ENCODE measurements at regions of chr15 and their contacts with region 1.

Region 1: GRCh38 chr15:45198337-45199135 is 10.8 kb upstream of the SHF start:
- DNase-seq: peak in 1 of 2 experiments; percentile 96
- H3K4me3 ChIP-seq: peak overlapping the region; percentile 66 to 100 (median 96)
- H3K27ac ChIP-seq: peak overlapping the region; percentile 50; the same call in 1 of the 2 replicates
- H3K4me1 ChIP-seq: no peaks in the 10 kb centered on the region
- H3K27me3 ChIP-seq: no peaks in the 10 kb centered on the region; a peak in 1 of 7 replicates
- CTCF ChIP-seq: peak; percentile 61 to 84 (median 80)
- EP300 ChIP-seq: no peak
- POLR2A ChIP-seq: peak in 1 of 2 experiments; percentile 41; a peak in 1 of 3 replicates
- RAD21 ChIP-seq: peak; percentile 18 to 32; a peak in 3 of 4 replicates

Region 2: DNA sequence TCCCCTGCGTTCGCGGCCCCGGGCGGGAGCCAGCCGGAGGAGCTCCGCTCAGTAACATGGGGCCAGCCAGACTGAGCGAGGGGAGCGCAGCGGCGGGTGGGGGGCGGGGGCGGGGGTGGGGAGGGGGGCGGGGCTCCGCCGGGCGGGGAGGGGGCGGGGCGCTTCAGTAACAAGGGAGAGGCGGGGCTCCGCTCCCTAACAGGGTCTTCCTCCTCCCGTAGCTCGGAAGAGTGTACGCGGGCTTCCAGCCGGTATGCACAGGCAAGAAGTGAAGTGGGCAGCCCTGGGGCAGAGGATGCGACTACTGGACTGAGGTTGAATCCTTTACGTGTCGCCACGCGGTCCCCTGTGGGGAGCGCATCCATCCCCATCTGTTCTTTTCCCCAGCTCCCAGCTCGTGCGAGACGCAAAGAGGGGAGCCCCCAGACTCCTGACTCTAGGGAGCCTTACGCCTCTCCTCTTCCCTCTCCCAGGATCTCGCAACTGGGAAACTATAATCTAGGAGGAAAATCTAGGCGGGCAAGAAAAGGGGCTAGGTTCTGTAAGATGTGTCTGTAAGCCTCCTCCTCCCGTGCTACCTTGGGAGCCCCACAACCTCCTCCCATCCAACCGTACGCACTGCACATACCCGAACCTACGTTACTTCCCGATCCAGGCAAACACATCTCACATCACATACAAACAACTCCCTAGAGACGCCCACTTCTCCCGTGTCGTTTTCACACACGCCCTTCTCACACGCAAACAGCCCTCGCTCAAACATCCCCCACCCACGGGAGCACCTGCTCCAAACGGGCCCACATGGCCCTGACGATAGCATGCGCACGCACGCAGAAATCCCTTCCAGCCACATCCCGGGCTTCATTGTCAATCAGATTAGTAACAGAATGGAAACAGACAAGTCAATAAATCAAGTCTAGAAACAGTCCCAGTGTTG is 10.4 kb before region 1 on chr15 and contains the start of gene SHF:
- CTCF ChIA-PET with region 1: interaction called, 1,117 read pairs
- POLR2A ChIA-PET with region 1: interaction called, 55 read pairs
- DNase-seq: peak in 1 of 2 experiments; percentile 77
- H3K4me3 ChIP-seq: peak within 1 kb of the TSS; percentile 61 to 93 (median 82)
- H3K27ac ChIP-seq: no peak within 1 kb of the TSS
- H3K4me1 ChIP-seq: peaks cover 5 to 22% (median 13%) of the 10 kb centered on the region in 4 experiments
- H3K27me3 ChIP-seq: peaks cover 0 to 19% (median 13%) of the 10 kb centered on the region in 4 experiments; a peak in 6 of 7 replicates
- CTCF ChIP-seq: no peak
- EP300 ChIP-seq: no peak
- POLR2A ChIP-seq: peak in 1 of 2 experiments; percentile 49; a peak in 1 of 3 replicates
- RAD21 ChIP-seq: no peak
- total RNA-seq, gene SHF: 23.9 and 26.7 TPM in 2 replicates

Region 3: DNA sequence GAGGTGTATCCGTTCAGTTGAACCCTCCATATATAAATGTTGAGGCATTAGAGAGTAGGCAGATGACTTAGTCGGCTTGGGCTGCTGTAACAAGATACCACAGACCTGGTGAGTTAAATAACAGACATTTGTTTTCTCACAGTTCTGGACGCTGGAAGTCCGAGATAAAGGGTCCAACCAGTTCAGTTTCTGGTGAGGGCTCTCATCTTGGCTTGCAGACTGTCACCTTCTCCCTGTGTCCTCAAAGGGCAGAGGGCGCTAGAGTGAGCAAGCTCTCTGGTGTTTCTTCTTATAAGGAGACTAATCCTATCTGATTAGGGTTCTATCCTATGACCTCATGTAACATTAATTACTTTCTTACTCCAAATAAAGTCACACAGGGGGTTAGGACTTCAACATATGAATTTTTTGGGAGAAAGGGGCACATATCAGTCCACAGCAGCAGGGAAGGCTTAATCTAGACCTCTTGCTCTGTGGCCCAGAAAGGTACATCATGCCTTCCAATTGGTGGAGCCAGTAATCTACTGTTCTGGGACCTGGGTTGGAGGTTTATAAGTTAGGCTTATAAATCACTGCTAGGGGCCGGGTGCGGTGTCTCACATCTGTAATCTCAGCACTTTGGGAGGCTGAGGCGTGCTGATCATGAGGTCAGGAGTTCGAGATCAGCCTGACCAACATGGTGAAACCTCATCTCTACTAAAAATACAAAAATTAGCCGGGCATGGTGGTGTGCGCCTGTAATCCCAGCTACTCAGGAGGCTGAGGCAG is 27.2 kb after region 1 on chr15:
- CTCF ChIA-PET with region 1: interaction called, 213 read pairs
- POLR2A ChIA-PET with region 1: interaction called, 3 read pairs
- DNase-seq: no peak
- H3K4me3 ChIP-seq: no peak overlapping the region
- H3K27ac ChIP-seq: no peak overlapping the region
- H3K4me1 ChIP-seq: no peaks in the 10 kb centered on the region
- H3K27me3 ChIP-seq: no peaks in the 10 kb centered on the region
- CTCF ChIP-seq: peak; percentile 26 to 41 (median 26); a peak in 3 of 4 replicates
- EP300 ChIP-seq: no peak
- POLR2A ChIP-seq: no peak
- RAD21 ChIP-seq: peak in 1 of 2 experiments; percentile 8; a peak in 1 of 4 replicates

Measured in H1 (cell line).